Activated CD4-positive, alpha-beta T cell treated with anti-CD3 and anti-CD28 coated beads for 36 hours (primary cell): ENCODE measurements at regions of chr16 and their contacts with region 1.

Region 1: GRCh38 chr16:87492721-87493607 is at the start of gene ZCCHC14:
- DNase-seq: peak; percentile 100
- ATAC-seq: peak; percentile 94
- H3K4me3 Mint-ChIP-seq: peak within 1 kb of the TSS; percentile 83
- H3K27ac Mint-ChIP-seq: peak within 1 kb of the TSS; percentile 85
- H3K4me1 Mint-ChIP-seq: peaks cover 48% of the 10 kb centered on the region
- H3K27me3 Mint-ChIP-seq: no peaks in the 10 kb centered on the region
- total RNA-seq, gene ZCCHC14: 10.1 to 12.9 TPM

Region 2: GRCh38 chr16:87316923-87317749 is 175.8 kb before region 1 on chr16 and contains the start of gene C16orf95:
- CTCF ChIA-PET with region 1: no interaction called
- POLR2A ChIA-PET with region 1: no interaction called
- intact Hi-C with region 1: loop called (anchors 1 to 5 kb)
- DNase-seq: peak; percentile 97
- ATAC-seq: peak; percentile 90
- H3K4me3 Mint-ChIP-seq: peak within 1 kb of the TSS; percentile 97
- H3K27ac Mint-ChIP-seq: peak within 1 kb of the TSS; percentile 95
- H3K4me1 Mint-ChIP-seq: peaks cover 11% of the 10 kb centered on the region
- H3K27me3 Mint-ChIP-seq: no peaks in the 10 kb centered on the region
- total RNA-seq, gene C16orf95: 5.6 to 12.8 TPM

Region 3: GRCh38 chr16:87435372-87436224 is 57.4 kb before region 1 on chr16:
- CTCF ChIA-PET with region 1: interaction called, 3 read pairs
- POLR2A ChIA-PET with region 1: no interaction called
- intact Hi-C with region 1: loop called (anchors 1 to 2 kb)
- DNase-seq: no peak
- ATAC-seq: peak; percentile 27
- H3K4me3 Mint-ChIP-seq: no peak overlapping the region
- H3K27ac Mint-ChIP-seq: no peak overlapping the region
- H3K4me1 Mint-ChIP-seq: peaks cover 23% of the 10 kb centered on the region
- H3K27me3 Mint-ChIP-seq: no peaks in the 10 kb centered on the region

Region 4: DNA sequence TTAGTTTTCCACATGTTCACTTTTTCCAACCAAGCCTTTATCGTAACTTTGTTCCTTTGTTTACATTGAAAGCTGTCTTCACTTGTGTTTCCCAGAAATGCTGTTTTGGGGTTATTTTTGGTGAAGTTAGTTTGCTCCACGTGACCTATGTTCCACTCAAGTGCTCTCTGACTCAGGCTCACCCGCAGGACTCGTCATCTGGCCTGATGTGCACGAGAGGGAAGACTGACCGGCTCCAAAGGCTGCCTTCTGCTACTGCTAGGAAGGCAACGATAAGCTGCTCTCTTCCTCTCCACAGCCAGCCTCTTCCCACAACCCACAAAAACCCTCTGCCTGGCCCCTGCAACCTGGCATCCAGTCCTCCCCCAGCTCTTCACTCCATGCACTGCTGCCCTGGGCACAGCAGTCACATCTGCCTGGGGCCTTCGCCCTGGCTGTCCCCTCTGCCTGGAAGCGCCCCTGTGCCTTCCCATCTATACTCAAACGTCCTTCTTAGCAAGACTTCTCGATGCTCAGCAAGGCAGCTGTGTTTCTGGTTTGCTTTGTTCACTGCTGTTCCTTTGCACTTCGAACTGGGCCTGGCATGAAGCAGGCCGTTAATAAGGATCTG is 28.2 kb before region 1 on chr16:
- CTCF ChIA-PET with region 1: interaction called, 5 read pairs
- POLR2A ChIA-PET with region 1: no interaction called
- intact Hi-C with region 1: loop called in 1 of 2 experiments (anchors 1 kb)
- DNase-seq: peak; percentile 73
- ATAC-seq: peak; percentile 77
- H3K4me3 Mint-ChIP-seq: peak overlapping the region; percentile 60
- H3K27ac Mint-ChIP-seq: peak overlapping the region; percentile 90
- H3K4me1 Mint-ChIP-seq: peaks cover 46% of the 10 kb centered on the region
- H3K27me3 Mint-ChIP-seq: no peaks in the 10 kb centered on the region

Region 5: DNA sequence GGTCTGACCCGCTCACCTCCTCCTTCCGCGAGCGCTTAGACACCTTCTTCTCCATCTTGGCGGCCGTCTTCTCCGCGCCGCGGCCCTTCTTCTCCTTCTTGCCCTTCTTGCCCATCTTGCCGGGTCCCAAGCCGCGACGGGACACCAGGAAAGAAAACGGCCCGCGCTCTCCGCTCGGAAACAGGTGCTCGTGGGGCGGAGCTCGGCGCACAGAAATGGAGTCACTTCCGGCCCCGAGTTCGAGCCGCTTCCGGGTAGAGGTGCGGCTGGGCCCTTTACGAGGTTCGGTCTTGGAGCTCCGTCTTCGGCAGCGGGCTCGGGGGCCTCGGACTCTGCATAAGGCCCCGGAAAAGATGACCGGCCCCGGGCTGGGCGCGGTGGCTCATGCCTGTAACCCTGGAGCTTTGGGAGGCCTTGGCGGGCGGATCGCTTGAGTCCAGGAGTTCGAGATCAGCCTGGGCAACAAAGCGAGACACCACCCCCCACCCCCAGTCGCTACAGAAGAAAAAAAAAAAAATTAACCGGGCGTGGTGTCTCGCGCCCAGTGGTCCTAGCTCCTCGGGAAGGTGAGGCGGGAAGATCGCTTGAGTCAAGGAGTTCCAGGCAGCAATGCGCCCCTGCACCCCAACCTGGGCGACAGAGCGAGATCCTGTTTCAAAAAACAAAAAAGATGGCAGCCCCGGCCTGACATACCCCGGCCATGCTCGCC is 273.0 kb after region 1 on chr16 and contains the start of gene KLHDC4:
- CTCF ChIA-PET with region 1: no interaction called
- POLR2A ChIA-PET with region 1: no interaction called
- intact Hi-C with region 1: loop called in 1 of 2 experiments (anchors 5 kb)
- DNase-seq: peak; percentile 94
- ATAC-seq: peak; percentile 88
- H3K4me3 Mint-ChIP-seq: peak within 1 kb of the TSS; percentile 100
- H3K27ac Mint-ChIP-seq: peak within 1 kb of the TSS; percentile 99
- H3K4me1 Mint-ChIP-seq: peaks cover 35% of the 10 kb centered on the region
- H3K27me3 Mint-ChIP-seq: no peaks in the 10 kb centered on the region
- total RNA-seq, gene KLHDC4: 67.0 to 77.3 TPM

Region 6: GRCh38 chr16:87895641-87896141 is 402.7 kb after region 1 on chr16:
- CTCF ChIA-PET with region 1: no interaction called
- POLR2A ChIA-PET with region 1: no interaction called
- intact Hi-C with region 1: loop called in 1 of 2 experiments (anchors 5 kb)
- DNase-seq: peak; percentile 95
- ATAC-seq: peak; percentile 91
- H3K4me3 Mint-ChIP-seq: peak overlapping the region; percentile 44
- H3K27ac Mint-ChIP-seq: peak overlapping the region; percentile 99
- H3K4me1 Mint-ChIP-seq: peaks cover 56% of the 10 kb centered on the region
- H3K27me3 Mint-ChIP-seq: no peaks in the 10 kb centered on the region